ENCODE measurements at regions of chr11 and their contacts with region 1.

Region 1: DNA sequence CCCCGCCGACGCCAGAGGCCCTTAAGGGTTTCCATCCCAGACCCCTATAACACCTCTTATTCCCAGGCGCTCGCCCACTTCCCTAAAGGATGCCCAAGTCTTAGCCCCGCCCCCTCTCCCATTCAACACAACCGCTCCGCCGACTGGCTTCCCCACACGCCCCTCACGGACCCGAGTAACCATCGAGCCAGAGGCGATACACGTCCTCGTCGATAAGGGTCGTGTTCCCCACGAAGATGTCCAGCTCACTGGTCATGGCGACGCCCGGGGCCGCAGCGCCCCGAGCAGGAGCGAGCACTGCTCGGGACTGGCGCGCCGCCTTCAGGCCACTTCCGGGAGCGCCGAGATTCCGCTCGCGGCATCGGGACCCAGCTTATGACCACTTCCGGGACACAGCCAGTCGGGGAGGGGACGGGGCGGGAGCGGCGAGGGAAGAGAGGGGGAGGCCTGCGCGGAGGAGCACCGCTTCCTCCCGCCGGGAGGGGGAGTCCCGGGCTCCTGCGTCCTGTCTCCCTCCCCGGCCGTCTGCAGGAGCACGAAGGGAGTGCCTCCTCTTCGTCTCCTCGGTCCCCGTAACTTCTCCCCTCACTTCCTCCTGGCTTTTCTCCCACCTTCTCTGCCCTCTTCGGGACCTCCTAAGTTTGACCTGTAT is at the start of gene FIBP:
- DNase-seq: peak; percentile 89 to 98 (median 95)
- H3K4me3 ChIP-seq: peak within 1 kb of the TSS; percentile 94
- H3K4me3 Mint-ChIP-seq: peak within 1 kb of the TSS; percentile 83 to 97 (median 92)
- H3K27ac ChIP-seq: peak within 1 kb of the TSS; percentile 87
- H3K27ac Mint-ChIP-seq: peak within 1 kb of the TSS; percentile 84 to 100 (median 96)
- H3K4me1 ChIP-seq: peaks cover 48% of the 10 kb centered on the region
- H3K4me1 Mint-ChIP-seq: peaks cover 54 to 71% (median 69%) of the 10 kb centered on the region in 3 donors
- H3K27me3 ChIP-seq: no peaks in the 10 kb centered on the region
- H3K27me3 Mint-ChIP-seq: no peaks in the 10 kb centered on the region
- total RNA-seq, gene FIBP: 121 to 123 TPM

Region 2: DNA sequence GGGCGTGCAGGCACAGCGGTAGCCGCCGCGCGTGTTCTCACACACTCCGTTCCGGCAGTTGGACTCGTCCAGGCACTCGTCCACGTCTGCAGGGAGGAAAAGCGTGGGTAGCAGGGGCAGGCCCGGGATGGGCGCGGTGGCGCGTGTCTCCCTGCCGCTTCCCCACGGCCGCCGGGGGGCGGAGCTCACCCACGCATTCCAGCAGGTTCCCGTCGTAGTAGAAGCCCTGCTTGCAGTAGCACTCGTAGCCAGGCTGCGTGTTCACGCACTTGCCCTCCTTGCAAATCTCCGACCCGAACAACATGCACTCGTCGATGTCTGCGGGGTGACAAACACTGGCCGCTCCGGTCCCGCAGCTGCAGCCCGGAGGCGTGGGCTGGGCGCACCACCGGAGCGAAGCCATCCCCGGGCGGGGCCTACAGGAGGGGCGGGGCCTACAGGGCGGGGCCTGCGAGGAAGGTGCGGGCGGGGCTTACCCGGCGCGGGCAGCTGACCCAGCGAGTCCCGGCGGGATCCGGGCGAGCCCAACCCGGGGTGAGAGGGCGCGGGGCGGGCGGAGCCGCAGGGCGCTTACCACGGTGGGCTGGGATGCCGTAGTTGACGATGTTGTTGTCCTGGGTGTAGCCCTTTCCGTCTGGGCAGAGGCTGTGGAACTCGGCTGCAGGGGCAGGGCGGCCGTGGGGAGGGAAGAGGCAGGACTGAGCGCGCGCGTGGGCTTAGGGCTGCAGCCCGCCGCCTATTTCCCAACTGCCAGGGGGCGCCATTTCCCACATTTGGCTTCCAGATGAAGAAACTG is 347.8 kb before region 1 on chr11:
- CTCF ChIA-PET with region 1: no interaction called
- POLR2A ChIA-PET with region 1: no interaction called
- DNase-seq: peak; percentile 82 to 92 (median 89)
- H3K4me3 ChIP-seq: peak overlapping the region; percentile 74
- H3K4me3 Mint-ChIP-seq: peak overlapping the region; percentile 82 to 94 (median 87)
- H3K27ac ChIP-seq: peak overlapping the region; percentile 44
- H3K27ac Mint-ChIP-seq: peak overlapping the region; percentile 78 to 93 (median 84)
- H3K4me1 ChIP-seq: peaks cover 11% of the 10 kb centered on the region
- H3K4me1 Mint-ChIP-seq: peaks cover 13 to 20% (median 14%) of the 10 kb centered on the region in 3 donors
- H3K27me3 ChIP-seq: no peaks in the 10 kb centered on the region
- H3K27me3 Mint-ChIP-seq: no peaks in the 10 kb centered on the region

Region 3: GRCh38 chr11:65779851-65780577 is 108.3 kb before region 1 on chr11:
- CTCF ChIA-PET with region 1: interaction called, 17 read pairs
- POLR2A ChIA-PET with region 1: no interaction called
- DNase-seq: peak; percentile 66 to 83 (median 75)
- H3K4me3 ChIP-seq: peak overlapping the region; percentile 76
- H3K4me3 Mint-ChIP-seq: peak overlapping the region; percentile 68 to 92 (median 84)
- H3K27ac ChIP-seq: peak overlapping the region; percentile 64
- H3K27ac Mint-ChIP-seq: peak overlapping the region in 7 of 8 donors; percentile 23 to 87 (median 61)
- H3K4me1 ChIP-seq: peaks cover 12% of the 10 kb centered on the region
- H3K4me1 Mint-ChIP-seq: peaks cover 1 to 35% (median 6%) of the 10 kb centered on the region in 3 donors
- H3K27me3 ChIP-seq: no peaks in the 10 kb centered on the region
- H3K27me3 Mint-ChIP-seq: no peaks in the 10 kb centered on the region

Region 4: DNA sequence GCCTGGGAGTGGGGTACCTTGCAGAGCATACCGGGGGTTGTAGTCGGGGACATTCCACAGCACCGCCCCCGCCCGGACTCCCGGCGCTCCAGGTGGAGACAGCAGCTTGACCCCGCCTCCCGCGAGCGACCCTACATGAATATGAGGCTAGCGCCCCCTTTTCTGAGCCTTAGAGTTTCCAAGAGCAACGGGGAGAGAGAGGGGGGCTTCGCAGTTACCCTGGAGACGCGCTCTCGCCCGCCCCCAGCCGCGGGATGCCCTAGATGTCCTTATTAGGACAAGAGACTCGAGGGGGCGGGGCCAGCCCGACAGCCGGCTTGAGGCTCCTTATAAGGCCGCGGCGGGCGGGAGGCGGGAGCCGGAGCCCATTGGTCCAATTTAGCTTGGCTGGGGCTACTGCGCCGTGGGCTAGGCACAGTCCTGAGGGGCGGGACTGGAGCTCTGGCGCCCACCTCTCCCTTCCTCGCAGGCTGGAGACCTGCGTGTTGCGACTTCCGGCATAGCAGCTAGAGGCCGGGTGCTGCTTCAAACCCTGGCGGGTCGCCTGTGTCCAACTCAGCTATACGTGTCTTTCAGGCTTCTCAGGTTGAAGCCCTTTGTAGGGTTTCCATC is 29.0 kb before region 1 on chr11:
- CTCF ChIA-PET with region 1: interaction called, 560 read pairs
- POLR2A ChIA-PET with region 1: interaction called, 140 read pairs
- DNase-seq: peak; percentile 94 to 99 (median 97)
- H3K4me3 ChIP-seq: peak overlapping the region; percentile 94
- H3K4me3 Mint-ChIP-seq: peak overlapping the region; percentile 90 to 96 (median 93)
- H3K27ac ChIP-seq: peak overlapping the region; percentile 93
- H3K27ac Mint-ChIP-seq: peak overlapping the region; percentile 88 to 98 (median 98)
- H3K4me1 ChIP-seq: peaks cover 52% of the 10 kb centered on the region
- H3K4me1 Mint-ChIP-seq: peaks cover 46 to 62% (median 55%) of the 10 kb centered on the region in 3 donors
- H3K27me3 ChIP-seq: no peaks in the 10 kb centered on the region
- H3K27me3 Mint-ChIP-seq: no peaks in the 10 kb centered on the region

Region 5: GRCh38 chr11:65919146-65920033 is 31.1 kb after region 1 on chr11 and contains the start of gene DRAP1:
- CTCF ChIA-PET with region 1: interaction called, 33 read pairs
- POLR2A ChIA-PET with region 1: interaction called, 30 read pairs
- DNase-seq: peak; percentile 96 to 100 (median 98)
- H3K4me3 ChIP-seq: peak within 1 kb of the TSS; percentile 96
- H3K4me3 Mint-ChIP-seq: peak within 1 kb of the TSS; percentile 88 to 98 (median 93)
- H3K27ac ChIP-seq: peak within 1 kb of the TSS; percentile 82
- H3K27ac Mint-ChIP-seq: peak within 1 kb of the TSS; percentile 86 to 98 (median 91)
- H3K4me1 ChIP-seq: peaks cover 38% of the 10 kb centered on the region
- H3K4me1 Mint-ChIP-seq: peaks cover 27 to 63% (median 36%) of the 10 kb centered on the region in 3 donors
- H3K27me3 ChIP-seq: no peaks in the 10 kb centered on the region
- H3K27me3 Mint-ChIP-seq: peaks cover 0 to 3% of the 10 kb centered on the region in 2 donors
- total RNA-seq, gene DRAP1: 94.6 to 103 TPM

Region 6: DNA sequence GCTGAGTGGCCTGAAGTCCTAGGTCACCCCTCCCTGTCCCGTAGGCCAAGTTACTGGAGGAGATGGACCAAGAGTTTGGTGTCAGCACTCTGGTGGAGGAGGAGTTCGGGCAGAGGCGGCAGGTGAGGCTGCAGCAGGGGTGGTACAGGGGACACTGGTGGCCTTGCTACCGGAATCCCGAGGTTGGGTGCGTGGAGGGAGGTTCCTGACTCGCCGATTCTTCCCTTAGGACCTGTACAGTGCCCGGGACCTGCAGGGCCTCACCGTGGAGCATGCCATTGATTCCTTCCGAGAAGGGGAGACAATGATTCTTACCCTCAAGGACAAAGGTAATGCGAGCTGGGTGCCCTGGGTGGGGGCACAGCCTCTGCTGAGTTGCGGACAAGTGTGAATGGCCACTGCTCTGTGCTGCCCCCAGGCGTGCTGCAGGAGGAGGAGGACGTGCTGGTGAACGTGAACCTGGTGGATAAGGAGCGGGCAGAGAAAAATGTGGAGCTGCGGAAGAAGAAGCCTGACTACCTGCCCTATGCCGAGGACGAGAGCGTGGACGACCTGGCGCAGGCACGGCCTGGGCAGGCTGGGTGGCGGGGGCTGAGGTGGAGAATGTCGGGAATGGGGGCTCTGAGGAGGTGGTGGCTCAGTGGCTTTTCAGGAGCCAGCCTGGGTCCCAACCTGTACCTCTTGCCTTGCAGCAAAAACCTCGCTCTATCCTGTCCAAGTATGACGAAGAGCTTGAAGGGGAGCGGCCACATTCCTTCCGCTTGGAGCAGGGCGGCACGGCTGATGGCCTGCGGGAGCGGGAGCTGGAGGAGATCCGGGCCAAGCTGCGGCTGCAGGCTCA is 77.6 kb after region 1 on chr11:
- CTCF ChIA-PET with region 1: interaction called, 11 read pairs
- POLR2A ChIA-PET with region 1: interaction called, 7 read pairs
- DNase-seq: no peak
- H3K4me3 ChIP-seq: no peak overlapping the region
- H3K4me3 Mint-ChIP-seq: peak overlapping the region in 1 of 7 donors; percentile 60
- H3K27ac ChIP-seq: no peak overlapping the region
- H3K27ac Mint-ChIP-seq: peak overlapping the region in 1 of 8 donors; percentile 43
- H3K4me1 ChIP-seq: peaks cover 24% of the 10 kb centered on the region
- H3K4me1 Mint-ChIP-seq: peaks cover 33 to 45% (median 40%) of the 10 kb centered on the region in 3 donors
- H3K27me3 ChIP-seq: no peaks in the 10 kb centered on the region
- H3K27me3 Mint-ChIP-seq: no peaks in the 10 kb centered on the region

Region 7: DNA sequence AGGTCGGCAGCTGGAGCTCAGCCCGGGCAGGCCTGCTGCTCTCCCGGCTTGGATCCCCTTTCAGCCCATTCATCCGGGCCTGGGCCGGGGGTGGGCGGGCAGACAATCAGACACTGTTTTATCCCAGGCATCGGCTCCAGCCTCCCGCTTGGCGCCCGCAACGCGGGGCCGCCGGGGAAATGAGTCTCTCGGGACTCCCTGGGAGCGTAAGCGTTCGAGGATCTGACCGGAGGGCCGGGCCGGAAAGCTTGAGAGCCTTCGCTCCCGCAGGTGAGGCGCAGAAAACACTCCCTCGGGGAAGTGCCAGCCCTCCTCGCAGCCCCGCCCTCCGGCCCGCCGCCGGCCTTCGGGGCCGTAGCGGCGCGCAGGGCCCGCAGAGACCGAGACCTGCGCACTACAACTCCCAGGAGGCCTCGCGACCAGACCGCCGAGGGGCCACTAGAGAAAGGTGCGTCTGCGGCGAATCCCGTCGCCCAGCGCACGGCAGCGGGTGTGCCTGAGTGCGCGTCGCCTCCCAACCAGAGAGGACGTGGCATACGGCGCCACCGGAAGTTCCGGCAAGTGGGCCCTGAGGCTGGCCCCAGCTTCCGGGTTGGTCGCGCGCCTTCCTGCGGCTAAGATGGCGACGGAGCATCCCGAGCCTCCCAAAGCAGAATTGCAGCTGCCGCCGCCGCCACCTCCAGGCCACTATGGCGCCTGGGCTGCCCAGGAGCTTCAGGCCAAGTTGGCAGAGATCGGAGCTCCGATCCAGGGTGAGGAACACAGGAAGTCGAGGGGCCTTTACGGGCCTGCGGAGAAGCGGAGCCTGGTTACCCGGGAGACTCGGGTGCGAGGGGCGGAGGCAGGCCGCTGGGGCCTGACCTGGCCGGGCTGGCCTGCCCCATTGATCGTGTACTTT is 163.7 kb after region 1 on chr11 and contains the start of gene SF3B2:
- CTCF ChIA-PET with region 1: interaction called, 5 read pairs
- POLR2A ChIA-PET with region 1: interaction called, 10 read pairs
- DNase-seq: peak; percentile 93 to 97 (median 95)
- H3K4me3 ChIP-seq: peak within 1 kb of the TSS; percentile 79
- H3K4me3 Mint-ChIP-seq: peak within 1 kb of the TSS; percentile 98 to 100 (median 99)
- H3K27ac ChIP-seq: peak within 1 kb of the TSS; percentile 86
- H3K27ac Mint-ChIP-seq: peak within 1 kb of the TSS; percentile 96 to 99 (median 99)
- H3K4me1 ChIP-seq: peaks cover 23% of the 10 kb centered on the region
- H3K4me1 Mint-ChIP-seq: peaks cover 27 to 38% (median 34%) of the 10 kb centered on the region in 3 donors
- H3K27me3 ChIP-seq: no peaks in the 10 kb centered on the region
- H3K27me3 Mint-ChIP-seq: peaks cover 4 to 6% of the 10 kb centered on the region in 2 donors
- total RNA-seq, gene SF3B2: 261 to 274 TPM

Measured in CD8-positive, alpha-beta memory T cell (primary cell).